ENCODE measurements at regions of chr17 and their contacts with region 1.

Region 1: DNA sequence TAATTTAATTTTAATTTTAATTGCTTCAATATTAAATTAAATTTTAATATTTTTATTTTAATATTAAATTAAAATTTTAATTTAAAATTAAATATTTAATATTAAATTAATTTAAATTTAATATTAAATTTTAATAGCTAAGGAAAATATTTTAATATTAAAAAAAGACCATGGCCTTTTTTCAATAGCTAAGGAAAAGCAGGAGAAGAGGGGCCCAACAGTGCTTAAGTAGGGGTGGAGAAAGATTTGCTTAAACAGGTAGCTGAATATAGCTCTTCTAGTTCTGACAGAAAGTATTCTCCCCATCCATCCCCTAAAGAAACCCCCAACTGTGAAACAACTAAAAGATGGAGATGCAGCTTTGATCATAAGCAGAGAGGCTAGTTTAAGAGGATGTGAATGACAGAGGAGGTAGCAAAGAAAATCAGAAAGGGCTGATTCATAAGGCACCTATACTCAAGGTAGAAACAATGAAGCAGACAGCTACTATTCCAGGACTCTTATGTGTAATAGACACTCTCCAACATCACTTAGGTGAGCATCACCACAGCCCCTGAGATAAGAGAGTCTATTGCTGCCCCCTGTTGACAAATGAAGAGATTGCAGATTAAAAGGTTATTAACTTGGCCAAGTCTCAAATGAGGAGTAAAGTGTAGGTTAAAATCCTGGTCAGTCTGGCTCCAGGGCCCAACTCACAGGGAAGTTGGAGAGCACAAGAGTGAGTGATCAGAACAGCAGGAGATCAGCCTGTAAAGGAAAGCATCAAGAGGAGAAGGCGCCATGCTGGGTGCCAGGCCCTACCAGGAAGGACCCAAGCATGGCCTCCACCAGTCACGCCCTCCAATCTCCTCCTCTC is 7.8 kb upstream of the RNASEK start:
- DNase-seq: peak; percentile 84 to 85
- ATAC-seq: peak; percentile 91
- H3K4me3 ChIP-seq: no peak overlapping the region
- H3K27ac ChIP-seq: no peak overlapping the region
- H3K4me1 ChIP-seq: no peaks in the 10 kb centered on the region
- CTCF ChIP-seq: peak; percentile 96
- EP300 ChIP-seq: no peak
- POLR2A ChIP-seq: no peak
- RAD21 ChIP-seq: peak; percentile 96 to 97

Region 2: GRCh38 chr17:6677158-6677831 is 327.3 kb before region 1 on chr17:
- CTCF ChIA-PET with region 1: interaction called, 293 read pairs
- POLR2A ChIA-PET with region 1: no interaction called
- DNase-seq: no peak
- ATAC-seq: peak in 1 of 2 experiments; percentile 22; a peak in 1 of 6 replicates
- H3K4me3 ChIP-seq: no peak overlapping the region
- H3K27ac ChIP-seq: no peak overlapping the region
- H3K4me1 ChIP-seq: peaks cover 10% of the 10 kb centered on the region; the same call in 2 of the 3 replicates
- CTCF ChIP-seq: no peak
- EP300 ChIP-seq: no peak
- POLR2A ChIP-seq: no peak
- RAD21 ChIP-seq: no peak

Region 3: GRCh38 chr17:6831661-6832263 is 172.9 kb before region 1 on chr17 and contains the start of gene TEKT1:
- CTCF ChIA-PET with region 1: interaction called, 17 read pairs
- POLR2A ChIA-PET with region 1: no interaction called
- DNase-seq: peak; percentile 81 to 86
- ATAC-seq: peak; percentile 93 to 95
- H3K4me3 ChIP-seq: peak within 1 kb of the TSS; percentile 47
- H3K27ac ChIP-seq: peak within 1 kb of the TSS in 1 of 2 experiments; percentile 50; a peak in 2 of 6 replicates
- H3K4me1 ChIP-seq: peaks cover 11% of the 10 kb centered on the region; the same call in 2 of the 3 replicates
- CTCF ChIP-seq: no peak
- EP300 ChIP-seq: no peak
- POLR2A ChIP-seq: no peak
- RAD21 ChIP-seq: no peak
- polyA plus RNA-seq, gene TEKT1: not detected in 2 replicates

Region 4: GRCh38 chr17:6872137-6872808 is 132.4 kb before region 1 on chr17:
- CTCF ChIA-PET with region 1: interaction called, 36 read pairs
- POLR2A ChIA-PET with region 1: no interaction called
- DNase-seq: peak; percentile 90 to 98
- ATAC-seq: peak; percentile 98 to 100
- H3K4me3 ChIP-seq: no peak overlapping the region
- H3K27ac ChIP-seq: peak overlapping the region; percentile 85
- H3K4me1 ChIP-seq: peaks cover 58% of the 10 kb centered on the region
- CTCF ChIP-seq: no peak
- EP300 ChIP-seq: peak; percentile 90; a peak in 3 of 5 replicates
- POLR2A ChIP-seq: no peak
- RAD21 ChIP-seq: peak; percentile 27 to 41; a peak in 2 of 5 replicates

Region 5: DNA sequence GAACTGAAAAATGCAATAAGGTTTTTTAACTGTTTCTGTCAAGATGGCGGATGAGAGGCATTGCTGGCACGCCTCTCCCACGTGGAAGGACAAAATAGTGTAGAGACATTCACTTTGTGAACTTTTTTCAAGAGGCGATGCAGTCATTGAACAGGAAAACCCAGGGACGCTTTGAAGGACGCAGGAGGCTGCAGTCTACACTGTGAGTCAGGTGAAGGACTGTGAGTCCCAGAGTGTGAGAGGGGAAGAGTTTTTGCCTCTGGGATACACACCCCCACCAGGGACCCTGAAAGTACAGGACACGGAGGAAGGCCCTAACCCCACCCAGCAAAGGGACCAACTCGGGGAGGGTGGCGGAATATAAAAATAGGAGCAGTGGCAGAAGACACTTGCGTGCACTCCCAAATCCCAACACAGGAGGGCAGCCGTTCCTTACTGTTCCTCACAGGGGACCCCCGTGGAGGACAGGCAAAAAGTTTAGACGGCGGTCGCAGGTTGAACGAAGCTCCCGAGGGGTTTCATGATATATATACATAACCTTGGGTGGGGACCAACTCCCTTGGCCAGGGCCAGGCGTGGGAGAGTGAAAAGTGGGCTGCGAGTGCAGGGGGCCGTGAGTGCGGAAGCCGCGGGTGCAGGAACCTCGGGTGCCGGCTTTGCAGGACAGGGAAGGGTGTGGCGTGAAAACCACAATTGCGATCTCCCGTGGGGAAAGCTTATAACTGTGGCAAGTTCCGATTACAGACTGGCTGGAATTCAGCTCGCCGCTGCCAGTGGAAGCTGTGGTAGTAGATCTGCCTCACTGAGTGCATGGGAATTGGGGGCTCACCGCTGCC is 90.8 kb before region 1 on chr17:
- CTCF ChIA-PET with region 1: interaction called, 99 read pairs
- POLR2A ChIA-PET with region 1: interaction called, 3 read pairs
- DNase-seq: peak; percentile 57 to 74
- ATAC-seq: peak; percentile 70 to 82
- H3K4me3 ChIP-seq: peak overlapping the region; percentile 36; the same call in 2 of the 3 replicates
- H3K27ac ChIP-seq: peak overlapping the region; percentile 9 to 50; a peak in 3 of 6 replicates
- H3K4me1 ChIP-seq: peaks cover 5% of the 10 kb centered on the region; the same call in 2 of the 3 replicates
- CTCF ChIP-seq: peak; percentile 84
- EP300 ChIP-seq: no peak
- POLR2A ChIP-seq: no peak
- RAD21 ChIP-seq: peak; percentile 88 to 89

Region 6: GRCh38 chr17:6989779-6990178 is 14.8 kb before region 1 on chr17:
- CTCF ChIA-PET with region 1: interaction called, 44 read pairs
- POLR2A ChIA-PET with region 1: no interaction called
- DNase-seq: no peak
- ATAC-seq: no peak
- H3K4me3 ChIP-seq: no peak overlapping the region
- H3K27ac ChIP-seq: no peak overlapping the region
- H3K4me1 ChIP-seq: no peaks in the 10 kb centered on the region
- CTCF ChIP-seq: no peak
- EP300 ChIP-seq: no peak
- POLR2A ChIP-seq: no peak
- RAD21 ChIP-seq: no peak

Region 7: DNA sequence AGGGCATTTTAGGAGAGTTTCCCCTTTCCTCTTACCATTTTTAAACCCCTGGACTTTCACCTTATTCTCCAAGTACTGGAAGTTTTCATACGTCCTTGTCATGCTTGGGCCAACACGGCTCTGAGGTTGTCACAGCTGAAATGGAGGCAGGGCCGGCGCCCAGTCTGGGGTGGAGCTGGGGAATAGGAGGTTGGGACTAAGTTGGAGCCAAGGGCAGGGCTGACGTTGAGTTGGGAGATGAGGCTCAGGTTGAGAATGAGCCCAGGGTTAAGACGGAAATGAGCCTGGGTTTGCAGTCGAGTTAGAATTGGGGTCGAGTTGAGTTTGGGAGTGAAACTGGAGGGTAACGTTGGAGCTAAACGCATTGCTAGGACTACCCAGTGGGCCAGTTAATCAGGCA is 74.1 kb after region 1 on chr17:
- CTCF ChIA-PET with region 1: no interaction called
- POLR2A ChIA-PET with region 1: no interaction called
- DNase-seq: no peak
- ATAC-seq: no peak
- H3K4me3 ChIP-seq: no peak overlapping the region
- H3K27ac ChIP-seq: no peak overlapping the region
- H3K4me1 ChIP-seq: no peaks in the 10 kb centered on the region
- CTCF ChIP-seq: no peak
- EP300 ChIP-seq: no peak
- POLR2A ChIP-seq: no peak
- RAD21 ChIP-seq: no peak

Region 8: GRCh38 chr17:7173687-7174602 is 169.3 kb after region 1 on chr17:
- CTCF ChIA-PET with region 1: no interaction called
- POLR2A ChIA-PET with region 1: no interaction called
- DNase-seq: no peak
- ATAC-seq: no peak
- H3K4me3 ChIP-seq: no peak overlapping the region
- H3K27ac ChIP-seq: no peak overlapping the region
- H3K4me1 ChIP-seq: peaks cover 18% of the 10 kb centered on the region
- CTCF ChIP-seq: no peak
- EP300 ChIP-seq: no peak
- POLR2A ChIP-seq: no peak
- RAD21 ChIP-seq: no peak